Endothelial cell of umbilical vein (primary cell): ENCODE measurements at regions of chr17 and their contacts with region 1.

Region 1: GRCh38 chr17:80071116-80071980 is 30.0 kb upstream of the GAA start:
- DNase-seq: peak; percentile 82
- H3K4me3 ChIP-seq: peak overlapping the region; percentile 7 to 54 (median 26)
- H3K27ac ChIP-seq: peak overlapping the region; percentile 67
- H3K4me1 ChIP-seq: peaks cover 29% of the 10 kb centered on the region
- H3K27me3 ChIP-seq: no peaks in the 10 kb centered on the region
- CTCF ChIP-seq: no peak
- POLR2A ChIP-seq: peak; percentile 69

Region 2: GRCh38 chr17:80035943-80036714 is 35.2 kb before region 1 on chr17 and contains the start of gene CCDC40:
- CTCF ChIA-PET with region 1: no interaction called
- POLR2A ChIA-PET with region 1: no interaction called
- dilution Hi-C with region 1: no loop called
- intact Hi-C with region 1: loop called (anchors 2 kb)
- DNase-seq: peak; percentile 72
- H3K4me3 ChIP-seq: peak within 1 kb of the TSS; percentile 5 to 86 (median 76)
- H3K27ac ChIP-seq: peak within 1 kb of the TSS; percentile 71
- H3K4me1 ChIP-seq: peaks cover 7% of the 10 kb centered on the region
- H3K27me3 ChIP-seq: no peaks in the 10 kb centered on the region
- CTCF ChIP-seq: no peak
- POLR2A ChIP-seq: peak; percentile 63
- total RNA-seq, gene CCDC40: 4.1 and 5.5 TPM in 2 replicates

Region 3: GRCh38 chr17:80082403-80083135 is 11.2 kb after region 1 on chr17:
- CTCF ChIA-PET with region 1: interaction called, 17 read pairs
- POLR2A ChIA-PET with region 1: no interaction called
- dilution Hi-C with region 1: no loop called
- intact Hi-C with region 1: no loop called
- DNase-seq: peak; percentile 59
- H3K4me3 ChIP-seq: no peak overlapping the region
- H3K27ac ChIP-seq: no peak overlapping the region
- H3K4me1 ChIP-seq: no peaks in the 10 kb centered on the region
- H3K27me3 ChIP-seq: no peaks in the 10 kb centered on the region
- CTCF ChIP-seq: peak; percentile 50 to 84
- POLR2A ChIP-seq: no peak